ENCODE measurements at regions of chr4 and their contacts with region 1.

Region 1: DNA sequence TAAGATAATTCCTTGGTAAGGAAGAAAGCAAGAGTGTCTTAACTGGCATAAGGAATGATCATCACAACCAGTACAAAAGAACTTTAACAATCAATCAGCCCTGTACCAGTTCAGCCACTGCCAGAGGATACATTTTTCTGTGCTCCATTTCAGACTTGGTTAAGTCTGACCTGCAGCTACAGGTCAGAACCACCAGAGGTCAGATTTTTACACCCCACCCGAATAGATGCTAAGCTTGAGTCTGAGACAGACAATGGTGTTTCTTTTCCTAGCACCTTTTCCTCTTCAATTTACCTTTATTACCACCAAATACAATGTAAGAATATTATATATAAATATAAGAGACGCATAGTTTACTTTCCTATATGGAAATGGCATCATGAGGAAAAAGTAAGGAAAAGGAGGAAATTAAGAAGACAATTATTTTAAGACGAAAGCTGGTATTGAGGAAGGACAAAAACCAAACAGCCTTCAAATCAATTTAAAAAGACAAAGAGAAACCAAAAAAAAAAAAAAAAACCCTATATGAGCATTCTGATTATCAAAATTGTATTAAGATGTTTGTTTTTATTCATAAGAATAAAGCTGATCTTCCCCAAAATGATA is 215.3 kb upstream of the TTC29 start:
- DNase-seq: no peak
- H3K4me3 ChIP-seq: no peak overlapping the region
- H3K27ac ChIP-seq: no peak overlapping the region
- H3K4me1 ChIP-seq: no peaks in the 10 kb centered on the region; a peak in 2 of 7 replicates
- H3K27me3 ChIP-seq: peaks cover 0 to 4% (median 0%) of the 10 kb centered on the region in 4 experiments; a peak in 2 of 7 replicates
- CTCF ChIP-seq: peak in 2 of 3 experiments; percentile 73 to 76; a peak in 3 of 4 replicates
- EP300 ChIP-seq: no peak
- POLR2A ChIP-seq: no peak
- RAD21 ChIP-seq: peak; percentile 81 to 82

Region 2: DNA sequence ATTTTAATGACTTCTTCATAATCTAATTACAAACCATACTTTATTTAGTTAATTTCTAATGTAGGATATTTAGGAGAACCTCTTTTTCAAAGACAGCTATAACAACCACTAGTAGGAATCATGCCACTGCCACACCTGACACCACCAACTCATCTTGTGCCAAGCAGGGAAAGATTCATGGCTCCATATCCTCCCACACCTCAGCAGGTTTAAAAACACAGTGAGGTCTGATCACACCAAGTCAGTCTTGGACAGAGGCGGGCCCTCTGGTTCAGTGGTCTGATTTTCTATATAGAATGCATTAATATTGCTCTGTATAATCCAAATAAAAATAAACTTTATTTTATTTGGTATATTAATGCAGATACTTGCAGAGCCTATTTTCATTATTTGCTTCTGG is 12.3 kb after region 1 on chr4:
- CTCF ChIA-PET with region 1: interaction called, 27 read pairs
- POLR2A ChIA-PET with region 1: no interaction called
- DNase-seq: no peak
- H3K4me3 ChIP-seq: no peak overlapping the region
- H3K27ac ChIP-seq: no peak overlapping the region
- H3K4me1 ChIP-seq: no peaks in the 10 kb centered on the region; a peak in 1 of 7 replicates
- H3K27me3 ChIP-seq: no peaks in the 10 kb centered on the region
- CTCF ChIP-seq: no peak
- EP300 ChIP-seq: no peak
- POLR2A ChIP-seq: no peak
- RAD21 ChIP-seq: no peak

Region 3: DNA sequence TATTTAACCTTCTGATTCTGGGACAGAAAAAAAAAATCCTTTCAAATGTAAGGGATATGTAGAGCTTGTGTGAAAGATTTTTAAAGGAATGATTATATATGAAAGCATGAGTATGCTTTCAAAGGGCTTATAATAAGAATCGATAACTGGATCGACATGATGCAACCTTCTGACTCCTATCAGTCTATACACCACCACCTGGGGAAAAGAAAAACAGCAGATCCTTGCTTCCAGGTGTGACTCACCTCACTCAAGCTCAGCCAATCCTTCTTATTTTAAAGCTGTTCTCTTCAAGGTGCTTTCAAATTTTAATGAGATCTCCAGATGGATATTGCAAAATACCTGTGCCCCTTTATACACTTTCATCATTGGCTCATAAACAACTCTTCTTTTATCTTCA is 217.8 kb after region 1 on chr4:
- CTCF ChIA-PET with region 1: interaction called, 21 read pairs
- POLR2A ChIA-PET with region 1: no interaction called
- DNase-seq: peak in 1 of 2 experiments; percentile 23
- H3K4me3 ChIP-seq: no peak overlapping the region; a peak in 1 of 8 replicates
- H3K27ac ChIP-seq: no peak overlapping the region
- H3K4me1 ChIP-seq: no peaks in the 10 kb centered on the region
- H3K27me3 ChIP-seq: peaks cover 0 to 1% (median 0%) of the 10 kb centered on the region in 4 experiments; a peak in 1 of 7 replicates
- CTCF ChIP-seq: peak in 2 of 3 experiments; percentile 7 to 45; a peak in 2 of 4 replicates
- EP300 ChIP-seq: no peak
- POLR2A ChIP-seq: no peak
- RAD21 ChIP-seq: peak; percentile 27 to 47

Region 4: GRCh38 chr4:147596981-147597380 is 436.0 kb after region 1 on chr4:
- CTCF ChIA-PET with region 1: interaction called, 12 read pairs
- POLR2A ChIA-PET with region 1: no interaction called
- DNase-seq: no peak
- H3K4me3 ChIP-seq: no peak overlapping the region
- H3K27ac ChIP-seq: no peak overlapping the region
- H3K4me1 ChIP-seq: peaks cover 0 to 3% (median 0%) of the 10 kb centered on the region in 4 experiments; a peak in 1 of 7 replicates
- H3K27me3 ChIP-seq: no peaks in the 10 kb centered on the region
- CTCF ChIP-seq: no peak
- EP300 ChIP-seq: no peak
- POLR2A ChIP-seq: no peak
- RAD21 ChIP-seq: no peak

Measured in H1 (cell line).